PC-9 (cell line): ENCODE measurements at regions of chr9 and their contacts with region 1.

Region 1: GRCh38 chr9:72337286-72337685 is 27.7 kb downstream of the ZFAND5 start:
- DNase-seq: no peak
- H3K4me3 ChIP-seq: no peak overlapping the region
- H3K27ac ChIP-seq: no peak overlapping the region
- H3K4me1 ChIP-seq: no peaks in the 10 kb centered on the region
- H3K27me3 ChIP-seq: no peaks in the 10 kb centered on the region
- CTCF ChIP-seq: no peak

Region 2: GRCh38 chr9:72808446-72808768 is 471.1 kb after region 1 on chr9:
- CTCF ChIA-PET with region 1: no interaction called
- POLR2A ChIA-PET with region 1: interaction called, 12 read pairs
- intact Hi-C with region 1: no loop called
- DNase-seq: no peak
- H3K4me3 ChIP-seq: no peak overlapping the region
- H3K27ac ChIP-seq: no peak overlapping the region
- H3K4me1 ChIP-seq: no peaks in the 10 kb centered on the region; the same call in 1 of the 2 replicates
- H3K27me3 ChIP-seq: no peaks in the 10 kb centered on the region
- CTCF ChIP-seq: no peak